Aorta (tissue), 5 donors: ENCODE measurements at regions of chr1 and their contacts with region 1.

Region 1: DNA sequence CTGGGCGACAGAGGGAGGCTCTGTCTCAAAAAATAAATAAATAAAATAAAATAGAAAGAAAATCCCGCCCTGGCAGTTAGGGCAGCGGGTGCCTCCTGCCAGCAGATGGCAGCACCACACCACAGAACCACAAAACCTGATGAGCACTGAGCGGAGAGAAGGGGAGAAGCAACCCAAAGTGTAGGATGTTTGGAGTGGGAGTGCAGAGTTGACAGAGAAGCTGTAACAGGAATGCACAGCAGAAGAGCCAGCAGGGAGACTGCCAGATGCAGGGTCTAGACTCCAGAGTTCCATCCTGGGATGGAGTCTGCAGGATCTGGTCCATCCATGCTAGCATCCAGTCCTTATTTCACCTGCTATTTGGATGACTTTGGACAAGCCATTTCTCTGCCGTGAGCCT is 29.7 kb upstream of the KIRREL1 start:
- DNase-seq: peak; percentile 76 to 88
- ATAC-seq: peak; percentile 82
- H3K4me3 ChIP-seq: no peak overlapping the region
- H3K27ac ChIP-seq: no peak overlapping the region
- H3K4me1 ChIP-seq: no peaks in the 10 kb centered on the region
- H3K27me3 ChIP-seq: peaks cover 0 to 3% of the 10 kb centered on the region in 2 donors

Region 2: GRCh38 chr1:157390651-157391050 is 573.1 kb before region 1 on chr1:
- intact Hi-C with region 1: no loop called
- DNase-seq: no peak
- ATAC-seq: no peak
- H3K4me3 ChIP-seq: no peak overlapping the region
- H3K27ac ChIP-seq: no peak overlapping the region
- H3K4me1 ChIP-seq: no peaks in the 10 kb centered on the region
- H3K27me3 ChIP-seq: no peaks in the 10 kb centered on the region

Region 3: DNA sequence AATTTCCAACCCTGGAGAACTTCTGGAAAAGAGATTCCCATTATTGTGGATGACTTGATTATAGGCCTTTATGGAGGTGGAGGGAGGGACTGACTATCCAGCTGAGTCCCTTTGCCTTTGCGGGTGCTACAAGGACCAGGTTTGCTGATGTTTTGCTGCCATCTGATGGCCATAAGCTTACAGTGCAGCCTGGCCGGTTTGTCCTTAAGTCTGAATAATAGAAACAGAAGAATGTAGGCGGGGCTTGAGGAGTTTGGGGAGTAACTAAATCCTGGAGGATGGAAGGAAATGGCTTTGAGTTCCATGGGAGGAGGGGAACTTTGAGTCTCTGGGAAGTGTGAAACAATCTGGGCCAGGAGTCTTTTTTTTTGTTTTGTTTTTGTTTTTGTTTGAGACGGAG is 161.3 kb after region 1 on chr1:
- intact Hi-C with region 1: loop called (anchors 2 kb)
- DNase-seq: peak; percentile 86 to 88
- ATAC-seq: peak; percentile 96
- H3K4me3 ChIP-seq: no peak overlapping the region
- H3K27ac ChIP-seq: no peak overlapping the region
- H3K4me1 ChIP-seq: no peaks in the 10 kb centered on the region
- H3K27me3 ChIP-seq: no peaks in the 10 kb centered on the region

Region 4: GRCh38 chr1:158527190-158527815 is 563.6 kb after region 1 on chr1:
- intact Hi-C with region 1: loop called in 1 of 2 experiments (anchors 10 kb)
- DNase-seq: no peak
- ATAC-seq: no peak
- H3K4me3 ChIP-seq: no peak overlapping the region
- H3K27ac ChIP-seq: no peak overlapping the region
- H3K4me1 ChIP-seq: no peaks in the 10 kb centered on the region
- H3K27me3 ChIP-seq: no peaks in the 10 kb centered on the region

Region 5: DNA sequence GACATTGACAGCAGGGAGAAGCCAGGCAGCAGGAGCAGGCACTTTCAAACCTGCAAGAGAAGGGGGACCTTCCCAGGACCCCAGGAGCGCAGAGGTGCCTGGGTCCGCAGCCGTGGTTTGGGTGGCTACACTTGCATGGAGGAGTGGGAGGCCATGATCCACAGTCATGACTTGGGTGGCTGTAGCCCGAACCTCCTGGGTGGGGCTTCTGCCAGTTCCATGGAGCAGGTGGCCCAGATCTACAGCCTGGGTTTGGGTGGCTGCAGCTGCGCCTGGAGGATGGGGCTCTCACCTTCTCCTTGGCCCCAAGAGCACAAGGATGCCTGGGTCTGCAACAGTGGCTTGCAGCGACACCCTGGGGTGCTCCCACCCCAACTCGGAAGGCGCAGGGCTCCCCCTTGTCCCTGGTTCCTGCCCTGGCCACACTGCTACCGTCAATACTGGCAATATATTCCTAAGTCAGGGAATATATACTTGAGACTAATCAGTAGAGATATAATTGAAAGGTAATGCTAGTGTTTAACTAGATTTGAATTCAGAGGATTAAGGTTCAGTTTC is 788.5 kb after region 1 on chr1:
- intact Hi-C with region 1: no loop called
- DNase-seq: no peak
- ATAC-seq: no peak
- H3K4me3 ChIP-seq: no peak overlapping the region
- H3K27ac ChIP-seq: no peak overlapping the region
- H3K4me1 ChIP-seq: no peaks in the 10 kb centered on the region
- H3K27me3 ChIP-seq: no peaks in the 10 kb centered on the region

Region 6: GRCh38 chr1:159009704-159010361 is 1046.1 kb after region 1 on chr1 and contains the start of gene IFI16:
- intact Hi-C with region 1: loop called in 1 of 2 experiments (anchors 10 kb)
- DNase-seq: no peak
- ATAC-seq: peak; percentile 94
- H3K4me3 ChIP-seq: peak within 1 kb of the TSS; percentile 54 to 97
- H3K27ac ChIP-seq: peak within 1 kb of the TSS in 1 of 2 donors; percentile 67
- H3K4me1 ChIP-seq: peaks cover 0 to 3% of the 10 kb centered on the region in 2 donors
- H3K27me3 ChIP-seq: no peaks in the 10 kb centered on the region
- total RNA-seq, gene IFI16: 112 to 174 TPM